ENCODE measurements at regions of chr2 and their contacts with region 1.

Region 1: GRCh38 chr2:45494269-45494977 is 116.6 kb downstream of the SRBD1 start:
- DNase-seq: no peak
- H3K4me3 ChIP-seq: no peak overlapping the region
- H3K27ac ChIP-seq: no peak overlapping the region
- H3K4me1 ChIP-seq: no peaks in the 10 kb centered on the region
- H3K27me3 ChIP-seq: no peaks in the 10 kb centered on the region
- CTCF ChIP-seq: peak; percentile 70 to 87 (median 75)

Region 2: GRCh38 chr2:44981136-44982108 is 513.0 kb before region 1 on chr2:
- intact Hi-C with region 1: loop called (anchors 1 kb)
- DNase-seq: peak in 1 of 2 donors; percentile 82
- H3K4me3 ChIP-seq: no peak overlapping the region
- H3K27ac ChIP-seq: no peak overlapping the region
- H3K4me1 ChIP-seq: peaks cover 0 to 4% of the 10 kb centered on the region in 2 donors
- H3K27me3 ChIP-seq: no peaks in the 10 kb centered on the region
- CTCF ChIP-seq: peak; percentile 66 to 85 (median 66)

Region 3: GRCh38 chr2:45169339-45170190 is 324.9 kb before region 1 on chr2:
- intact Hi-C with region 1: loop called (anchors 5 kb)
- DNase-seq: no peak
- H3K4me3 ChIP-seq: peak overlapping the region; percentile 70 to 71
- H3K27ac ChIP-seq: peak overlapping the region; percentile 57 to 65
- H3K4me1 ChIP-seq: peaks cover 0 to 2% of the 10 kb centered on the region in 2 donors
- H3K27me3 ChIP-seq: no peaks in the 10 kb centered on the region
- CTCF ChIP-seq: peak in 1 of 3 experiments; percentile 13

Region 4: GRCh38 chr2:45432406-45432805 is 62.0 kb before region 1 on chr2:
- intact Hi-C with region 1: loop called (anchors 1 kb)
- DNase-seq: peak in 1 of 2 donors; percentile 72
- H3K4me3 ChIP-seq: no peak overlapping the region
- H3K27ac ChIP-seq: peak overlapping the region; percentile 13 to 19
- H3K4me1 ChIP-seq: peaks cover 0 to 11% of the 10 kb centered on the region in 2 donors
- H3K27me3 ChIP-seq: no peaks in the 10 kb centered on the region
- CTCF ChIP-seq: peak in 1 of 3 experiments; percentile 29

Region 5: GRCh38 chr2:45778720-45779171 is 284.3 kb after region 1 on chr2:
- intact Hi-C with region 1: no loop called
- DNase-seq: peak in 1 of 2 donors; percentile 74
- H3K4me3 ChIP-seq: no peak overlapping the region
- H3K27ac ChIP-seq: no peak overlapping the region
- H3K4me1 ChIP-seq: no peaks in the 10 kb centered on the region
- H3K27me3 ChIP-seq: no peaks in the 10 kb centered on the region
- CTCF ChIP-seq: peak; percentile 53 to 85 (median 76)

Region 6: DNA sequence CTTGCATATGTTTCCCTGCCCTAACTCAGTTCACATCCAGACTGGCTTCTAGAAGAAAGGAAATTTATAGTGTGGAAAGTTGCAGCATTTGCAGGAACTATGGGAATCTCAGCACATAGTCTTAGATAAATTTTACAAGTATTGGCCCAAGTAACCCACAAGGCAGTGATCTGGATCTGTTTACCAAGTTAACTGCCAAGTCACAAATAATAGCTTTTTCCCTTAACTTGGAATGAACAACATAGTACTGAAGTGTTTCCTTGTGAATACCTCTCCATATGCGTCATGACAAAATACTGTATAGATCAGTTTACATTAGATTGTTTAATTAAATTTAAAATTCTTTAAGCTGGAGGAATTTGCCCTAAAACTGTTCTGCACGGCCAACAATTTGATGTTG is 547.0 kb after region 1 on chr2:
- intact Hi-C with region 1: no loop called
- DNase-seq: no peak
- H3K4me3 ChIP-seq: no peak overlapping the region
- H3K27ac ChIP-seq: no peak overlapping the region
- H3K4me1 ChIP-seq: no peaks in the 10 kb centered on the region
- H3K27me3 ChIP-seq: no peaks in the 10 kb centered on the region
- CTCF ChIP-seq: no peak